ENCODE measurements at regions of chr19 and their contacts with region 1.

Region 1: DNA sequence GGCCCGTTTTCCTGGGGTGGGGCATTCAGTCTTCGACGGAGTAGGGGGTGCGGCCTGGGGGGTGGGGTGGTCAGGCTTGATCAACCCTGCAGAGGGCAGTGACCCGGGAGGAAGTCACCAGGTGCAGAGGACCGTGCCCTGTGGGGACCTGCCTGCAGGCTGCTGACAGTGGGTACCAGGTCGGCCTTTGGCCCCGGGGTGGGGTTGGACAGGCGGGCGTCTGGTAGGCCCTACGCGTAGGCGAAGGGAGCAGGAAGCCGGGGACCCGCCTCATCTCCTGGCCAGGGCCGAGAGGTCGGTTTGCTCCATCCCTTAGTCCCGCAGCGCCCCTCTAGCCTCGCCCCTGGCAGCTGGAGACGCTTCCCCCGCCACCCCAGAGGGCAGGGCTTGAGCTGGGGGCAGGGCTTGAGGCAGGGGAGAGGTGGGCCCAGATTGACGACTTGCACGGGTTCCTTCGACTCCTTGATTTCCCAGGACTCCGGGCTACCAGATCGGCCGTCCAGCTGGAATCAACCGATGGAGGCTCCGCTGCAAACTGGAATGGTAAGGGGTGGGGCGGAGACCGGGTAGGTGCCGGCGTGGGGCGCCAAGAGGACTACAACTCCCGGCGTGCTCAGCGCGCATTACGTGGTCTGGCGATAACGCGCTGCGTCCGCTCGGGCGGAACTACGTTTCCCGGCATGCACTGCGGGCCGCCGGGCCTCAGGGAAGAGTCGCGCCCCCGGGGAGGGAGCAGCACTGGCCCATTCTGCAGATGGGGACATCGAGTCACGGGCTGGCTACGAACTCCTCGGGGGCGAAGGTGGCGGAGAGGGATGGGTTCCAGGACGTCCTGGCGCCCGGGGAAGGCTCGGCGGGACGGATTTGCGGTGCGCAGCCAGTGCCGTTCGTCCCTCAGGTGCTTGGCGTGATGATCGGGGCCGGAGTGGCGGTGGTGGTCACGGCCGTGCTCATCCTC is at the start of gene PNPLA6:
- H3K4me3 Mint-ChIP-seq: peak within 1 kb of the TSS; percentile 95
- H3K27ac Mint-ChIP-seq: peak within 1 kb of the TSS; percentile 93
- H3K4me1 Mint-ChIP-seq: peaks cover 65% of the 10 kb centered on the region
- H3K27me3 Mint-ChIP-seq: no peaks in the 10 kb centered on the region

Region 2: GRCh38 chr19:7478173-7478842 is 57.0 kb before region 1 on chr19:
- intact Hi-C with region 1: no loop called
- H3K4me3 Mint-ChIP-seq: no peak overlapping the region
- H3K27ac Mint-ChIP-seq: no peak overlapping the region
- H3K4me1 Mint-ChIP-seq: peaks cover 55% of the 10 kb centered on the region
- H3K27me3 Mint-ChIP-seq: peaks cover 4% of the 10 kb centered on the region

Region 3: GRCh38 chr19:7494416-7495098 is 40.8 kb before region 1 on chr19:
- intact Hi-C with region 1: no loop called
- H3K4me3 Mint-ChIP-seq: no peak overlapping the region
- H3K27ac Mint-ChIP-seq: peak overlapping the region; percentile 36
- H3K4me1 Mint-ChIP-seq: peaks cover 70% of the 10 kb centered on the region
- H3K27me3 Mint-ChIP-seq: peaks cover 24% of the 10 kb centered on the region

Region 4: GRCh38 chr19:7506385-7507328 is 28.7 kb before region 1 on chr19:
- intact Hi-C with region 1: loop called (anchors 2 kb)
- H3K4me3 Mint-ChIP-seq: peak overlapping the region; percentile 66
- H3K27ac Mint-ChIP-seq: peak overlapping the region; percentile 76
- H3K4me1 Mint-ChIP-seq: peaks cover 38% of the 10 kb centered on the region
- H3K27me3 Mint-ChIP-seq: peaks cover 48% of the 10 kb centered on the region

Region 5: GRCh38 chr19:7772752-7773291 is 237.5 kb after region 1 on chr19:
- intact Hi-C with region 1: no loop called
- H3K4me3 Mint-ChIP-seq: no peak overlapping the region
- H3K27ac Mint-ChIP-seq: peak overlapping the region; percentile 33
- H3K4me1 Mint-ChIP-seq: peaks cover 44% of the 10 kb centered on the region
- H3K27me3 Mint-ChIP-seq: peaks cover 7% of the 10 kb centered on the region

Measured in dendritic cell treated with granulocyte-macrophage colony-stimulating factor and Interleukin-4, amounts not matched to agents 40 ng/mL and 50 ng/mL, for 4 days (primary cell).